ENCODE measurements at regions of chr19 and their contacts with region 1.

Region 1: DNA sequence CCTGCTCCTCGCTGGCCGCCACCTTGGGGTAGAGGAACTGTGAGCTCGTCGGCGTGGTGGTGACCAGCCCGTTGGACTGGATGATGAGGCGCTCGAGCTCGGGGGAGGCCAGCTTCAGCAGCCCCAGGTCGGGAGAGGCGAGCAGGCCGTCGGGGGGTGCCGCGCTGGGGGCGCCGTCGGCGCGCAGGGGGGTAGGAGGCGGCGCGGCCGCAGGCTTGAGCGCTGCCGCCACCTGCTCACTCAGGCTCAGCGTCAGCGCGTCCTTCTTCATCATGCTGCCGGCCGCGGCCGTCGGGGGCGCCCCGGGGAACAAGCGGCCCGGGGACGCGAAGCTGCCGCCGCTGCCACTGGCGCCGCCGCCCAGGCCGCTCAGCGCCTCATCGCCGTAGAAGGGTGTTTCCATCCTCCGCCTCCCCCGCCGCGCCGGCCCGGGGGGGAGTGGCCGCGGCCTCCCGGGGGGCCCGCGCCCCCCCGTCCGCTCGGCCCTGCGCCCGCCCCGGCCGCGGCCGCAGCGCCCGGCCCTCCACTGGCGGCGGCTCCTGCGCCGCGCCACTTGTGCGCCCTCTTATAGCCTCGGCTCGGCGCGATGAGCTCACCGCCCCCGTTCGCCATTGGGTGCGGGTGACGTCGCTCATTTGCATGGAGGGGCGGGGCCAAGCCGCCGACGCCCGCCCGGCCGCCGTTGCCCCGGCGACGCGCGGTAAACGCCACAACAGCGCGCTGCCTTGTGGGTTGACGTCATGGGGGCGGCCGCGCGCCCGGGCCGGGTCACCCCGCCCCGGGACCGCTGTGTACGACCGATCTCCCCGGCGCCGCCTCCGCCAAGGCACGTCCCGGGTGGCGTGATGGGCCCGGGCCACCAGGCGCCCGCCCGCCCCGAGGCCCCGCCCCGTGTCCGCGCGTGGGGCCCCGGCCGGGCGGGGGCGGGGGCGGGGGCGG is at the start of gene JUND:
- DNase-seq: peak; percentile 100
- ATAC-seq: peak; percentile 63
- H3K4me3 ChIP-seq: peak within 1 kb of the TSS; percentile 77 to 98 (median 94)
- H3K4me3 Mint-ChIP-seq: peak within 1 kb of the TSS; percentile 97
- H3K27ac ChIP-seq: peak within 1 kb of the TSS; percentile 99 to 100
- H3K27ac Mint-ChIP-seq: peak within 1 kb of the TSS; percentile 98
- H3K4me1 ChIP-seq: peaks cover 23 to 43% of the 10 kb centered on the region in 2 donors
- H3K4me1 Mint-ChIP-seq: peaks cover 51% of the 10 kb centered on the region
- H3K27me3 ChIP-seq: no peaks in the 10 kb centered on the region
- H3K27me3 Mint-ChIP-seq: no peaks in the 10 kb centered on the region
- CTCF ChIP-seq: no peak
- total RNA-seq, gene JUND: 608 and 628 TPM in 2 replicates

Region 2: GRCh38 chr19:18192673-18193387 is 88.5 kb before region 1 on chr19 and contains the start of gene MPV17L2:
- CTCF ChIA-PET with region 1: interaction called, 29 read pairs
- POLR2A ChIA-PET with region 1: interaction called, 25 read pairs
- intact Hi-C with region 1: no loop called
- DNase-seq: peak; percentile 100
- ATAC-seq: peak; percentile 83
- H3K4me3 ChIP-seq: peak within 1 kb of the TSS; percentile 76 to 92 (median 82)
- H3K4me3 Mint-ChIP-seq: peak within 1 kb of the TSS; percentile 93
- H3K27ac ChIP-seq: peak within 1 kb of the TSS; percentile 86 to 93
- H3K27ac Mint-ChIP-seq: peak within 1 kb of the TSS; percentile 97
- H3K4me1 ChIP-seq: peaks cover 25 to 40% of the 10 kb centered on the region in 2 donors
- H3K4me1 Mint-ChIP-seq: peaks cover 38% of the 10 kb centered on the region
- H3K27me3 ChIP-seq: no peaks in the 10 kb centered on the region
- H3K27me3 Mint-ChIP-seq: no peaks in the 10 kb centered on the region
- CTCF ChIP-seq: no peak
- total RNA-seq, gene MPV17L2: 6.5 and 8.6 TPM in 2 replicates

Region 3: GRCh38 chr19:18251587-18252369 is 29.6 kb before region 1 on chr19:
- CTCF ChIA-PET with region 1: interaction called, 44 read pairs
- POLR2A ChIA-PET with region 1: interaction called, 5 read pairs
- intact Hi-C with region 1: no loop called
- DNase-seq: peak; percentile 88
- ATAC-seq: peak; percentile 74
- H3K4me3 ChIP-seq: no peak overlapping the region
- H3K4me3 Mint-ChIP-seq: no peak overlapping the region
- H3K27ac ChIP-seq: no peak overlapping the region
- H3K27ac Mint-ChIP-seq: peak overlapping the region; percentile 5
- H3K4me1 ChIP-seq: peaks cover 28 to 38% of the 10 kb centered on the region in 2 donors
- H3K4me1 Mint-ChIP-seq: peaks cover 29% of the 10 kb centered on the region
- H3K27me3 ChIP-seq: peaks cover 0 to 25% (median 2%) of the 10 kb centered on the region in 4 experiments
- H3K27me3 Mint-ChIP-seq: peaks cover 4% of the 10 kb centered on the region
- CTCF ChIP-seq: peak; percentile 87

Region 4: GRCh38 chr19:18322759-18323460 is 41.6 kb after region 1 on chr19 and contains the start of gene LSM4:
- CTCF ChIA-PET with region 1: interaction called, 259 read pairs
- POLR2A ChIA-PET with region 1: interaction called, 128 read pairs
- intact Hi-C with region 1: loop called (anchors 1 kb)
- DNase-seq: peak; percentile 100
- ATAC-seq: peak; percentile 94
- H3K4me3 ChIP-seq: peak within 1 kb of the TSS; percentile 81 to 97 (median 91)
- H3K4me3 Mint-ChIP-seq: peak within 1 kb of the TSS; percentile 87
- H3K27ac ChIP-seq: peak within 1 kb of the TSS; percentile 87 to 90
- H3K27ac Mint-ChIP-seq: peak within 1 kb of the TSS; percentile 94
- H3K4me1 ChIP-seq: peaks cover 29 to 45% of the 10 kb centered on the region in 2 donors
- H3K4me1 Mint-ChIP-seq: peaks cover 47% of the 10 kb centered on the region
- H3K27me3 ChIP-seq: no peaks in the 10 kb centered on the region
- H3K27me3 Mint-ChIP-seq: no peaks in the 10 kb centered on the region
- CTCF ChIP-seq: peak; percentile 62
- total RNA-seq, gene LSM4: 66.3 and 70.0 TPM in 2 replicates

Region 5: DNA sequence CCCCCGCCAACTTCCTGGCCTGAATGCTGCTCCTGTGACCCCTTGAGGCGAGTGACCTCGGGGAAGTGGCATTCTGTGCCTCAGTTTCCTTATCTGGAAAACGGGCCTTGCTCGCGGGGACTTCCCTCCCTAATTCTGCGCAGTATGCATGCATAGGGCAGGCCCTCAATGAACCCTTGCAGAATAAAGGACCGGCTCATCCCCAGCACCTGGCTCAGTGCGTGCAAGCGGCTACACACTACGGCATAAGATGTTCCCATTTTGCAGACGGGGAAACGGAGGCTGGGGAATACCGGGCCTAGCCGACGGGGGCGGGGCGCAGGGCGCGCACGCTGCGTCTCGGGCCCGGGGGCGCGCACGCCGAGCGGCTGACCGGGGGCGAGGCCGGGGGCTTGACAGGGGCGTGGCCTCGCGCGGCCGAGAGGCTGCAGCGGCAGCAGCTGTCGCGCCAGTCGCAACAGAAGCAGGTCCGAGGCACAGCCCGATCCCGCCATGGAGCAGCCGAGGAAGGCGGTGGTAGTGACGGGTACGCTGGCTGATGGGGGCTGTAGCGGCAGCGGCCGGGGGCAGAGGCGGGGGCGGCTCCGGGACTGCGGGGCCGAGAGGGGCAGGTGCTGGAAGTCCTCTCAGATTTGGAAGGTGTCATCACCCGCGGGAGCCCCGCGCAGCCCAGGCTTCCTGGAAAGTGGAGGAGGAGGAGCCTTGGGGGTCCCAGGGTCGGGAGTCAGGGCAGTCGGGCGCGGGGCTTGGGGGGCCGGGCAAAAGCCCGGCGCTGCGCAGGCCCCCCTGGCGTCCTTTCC is 59.0 kb after region 1 on chr19 and contains the start of gene PGPEP1:
- CTCF ChIA-PET with region 1: interaction called, 22 read pairs
- POLR2A ChIA-PET with region 1: no interaction called
- intact Hi-C with region 1: no loop called
- DNase-seq: peak; percentile 81
- ATAC-seq: peak; percentile 66
- H3K4me3 ChIP-seq: peak within 1 kb of the TSS; percentile 41 to 88 (median 81)
- H3K4me3 Mint-ChIP-seq: peak within 1 kb of the TSS; percentile 79
- H3K27ac ChIP-seq: peak within 1 kb of the TSS; percentile 52 to 70
- H3K27ac Mint-ChIP-seq: peak within 1 kb of the TSS; percentile 73
- H3K4me1 ChIP-seq: peaks cover 13 to 18% of the 10 kb centered on the region in 2 donors
- H3K4me1 Mint-ChIP-seq: peaks cover 13% of the 10 kb centered on the region
- H3K27me3 ChIP-seq: no peaks in the 10 kb centered on the region
- H3K27me3 Mint-ChIP-seq: peaks cover 3% of the 10 kb centered on the region
- CTCF ChIP-seq: no peak
- total RNA-seq, gene PGPEP1: 14.1 and 17.6 TPM in 2 replicates

Region 6: GRCh38 chr19:18408053-18408476 is 126.7 kb after region 1 on chr19:
- CTCF ChIA-PET with region 1: interaction called, 41 read pairs
- POLR2A ChIA-PET with region 1: interaction called, 3 read pairs
- intact Hi-C with region 1: loop called (anchors 2 kb)
- DNase-seq: peak; percentile 90
- ATAC-seq: peak; percentile 90
- H3K4me3 ChIP-seq: no peak overlapping the region
- H3K4me3 Mint-ChIP-seq: peak overlapping the region; percentile 44
- H3K27ac ChIP-seq: peak overlapping the region in 1 of 2 donors; percentile 15
- H3K27ac Mint-ChIP-seq: peak overlapping the region; percentile 89
- H3K4me1 ChIP-seq: peaks cover 18 to 19% of the 10 kb centered on the region in 2 donors
- H3K4me1 Mint-ChIP-seq: peaks cover 23% of the 10 kb centered on the region
- H3K27me3 ChIP-seq: peaks cover 0 to 20% (median 7%) of the 10 kb centered on the region in 4 experiments
- H3K27me3 Mint-ChIP-seq: peaks cover 18% of the 10 kb centered on the region
- CTCF ChIP-seq: peak; percentile 31

Measured in B cell (primary cell).